ENCODE measurements at regions of chr9 and their contacts with region 1.

Region 1: GRCh38 chr9:13351778-13352386 is 72.4 kb upstream of the MPDZ start:
- DNase-seq: peak; percentile 74
- H3K4me3 ChIP-seq: no peak overlapping the region
- H3K27ac ChIP-seq: no peak overlapping the region
- H3K4me1 ChIP-seq: no peaks in the 10 kb centered on the region
- H3K27me3 ChIP-seq: no peaks in the 10 kb centered on the region
- CTCF ChIP-seq: peak; percentile 32 to 37
- POLR2A ChIP-seq: no peak

Region 2: DNA sequence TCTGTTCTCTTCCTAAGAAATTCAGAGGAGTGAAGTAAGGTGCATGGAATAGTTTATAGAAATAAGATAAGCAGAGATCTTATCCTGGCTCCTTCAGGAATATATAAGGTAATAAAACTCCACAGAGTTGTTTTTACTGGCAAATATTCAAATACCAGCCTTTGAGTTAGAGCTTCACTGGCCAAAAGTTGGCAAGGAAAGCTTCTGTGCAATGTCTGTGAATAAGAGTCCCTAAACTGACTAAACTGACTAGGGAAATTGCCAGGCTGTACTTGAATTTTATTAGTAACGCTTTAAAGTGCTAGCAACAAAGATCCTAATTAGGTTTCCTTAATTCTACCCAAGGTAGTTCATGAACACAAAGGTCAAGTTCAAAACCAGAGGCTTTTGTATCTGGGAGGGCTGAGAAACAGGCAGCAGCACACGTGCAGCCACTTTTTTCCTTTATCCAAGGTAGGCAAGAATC is 58.7 kb after region 1 on chr9:
- CTCF ChIA-PET with region 1: interaction called, 3 read pairs
- POLR2A ChIA-PET with region 1: no interaction called
- dilution Hi-C with region 1: no loop called
- intact Hi-C with region 1: loop called (anchors 5 kb)
- DNase-seq: peak; percentile 80
- H3K4me3 ChIP-seq: no peak overlapping the region
- H3K27ac ChIP-seq: no peak overlapping the region
- H3K4me1 ChIP-seq: no peaks in the 10 kb centered on the region
- H3K27me3 ChIP-seq: peaks cover 7 to 14% of the 10 kb centered on the region in 2 experiments
- CTCF ChIP-seq: no peak
- POLR2A ChIP-seq: no peak

Region 3: DNA sequence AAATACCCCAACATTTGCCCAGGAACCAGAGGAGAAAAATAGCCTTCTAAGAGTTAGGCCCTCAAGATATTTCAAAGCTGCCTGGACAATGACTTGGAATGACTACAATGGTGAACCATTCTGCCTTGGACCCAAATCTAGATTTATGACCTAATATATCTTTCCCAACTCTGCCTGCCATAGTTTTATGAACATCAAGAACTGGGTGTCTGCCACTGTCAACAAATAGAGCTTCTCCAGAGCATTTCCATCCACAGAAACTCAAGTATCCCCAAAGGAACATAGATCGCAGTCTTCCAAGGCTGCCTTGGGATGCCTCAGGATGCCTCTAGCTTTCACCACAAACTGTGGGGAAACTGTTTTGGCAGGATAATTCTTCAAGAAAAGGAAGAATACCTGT is 1010.3 kb after region 1 on chr9:
- CTCF ChIA-PET with region 1: no interaction called
- POLR2A ChIA-PET with region 1: no interaction called
- dilution Hi-C with region 1: no loop called
- intact Hi-C with region 1: loop called (anchors 2 kb)
- DNase-seq: no peak
- H3K4me3 ChIP-seq: no peak overlapping the region
- H3K27ac ChIP-seq: no peak overlapping the region
- H3K4me1 ChIP-seq: peaks cover 3% of the 10 kb centered on the region
- H3K27me3 ChIP-seq: no peaks in the 10 kb centered on the region
- CTCF ChIP-seq: no peak
- POLR2A ChIP-seq: no peak

Region 4: DNA sequence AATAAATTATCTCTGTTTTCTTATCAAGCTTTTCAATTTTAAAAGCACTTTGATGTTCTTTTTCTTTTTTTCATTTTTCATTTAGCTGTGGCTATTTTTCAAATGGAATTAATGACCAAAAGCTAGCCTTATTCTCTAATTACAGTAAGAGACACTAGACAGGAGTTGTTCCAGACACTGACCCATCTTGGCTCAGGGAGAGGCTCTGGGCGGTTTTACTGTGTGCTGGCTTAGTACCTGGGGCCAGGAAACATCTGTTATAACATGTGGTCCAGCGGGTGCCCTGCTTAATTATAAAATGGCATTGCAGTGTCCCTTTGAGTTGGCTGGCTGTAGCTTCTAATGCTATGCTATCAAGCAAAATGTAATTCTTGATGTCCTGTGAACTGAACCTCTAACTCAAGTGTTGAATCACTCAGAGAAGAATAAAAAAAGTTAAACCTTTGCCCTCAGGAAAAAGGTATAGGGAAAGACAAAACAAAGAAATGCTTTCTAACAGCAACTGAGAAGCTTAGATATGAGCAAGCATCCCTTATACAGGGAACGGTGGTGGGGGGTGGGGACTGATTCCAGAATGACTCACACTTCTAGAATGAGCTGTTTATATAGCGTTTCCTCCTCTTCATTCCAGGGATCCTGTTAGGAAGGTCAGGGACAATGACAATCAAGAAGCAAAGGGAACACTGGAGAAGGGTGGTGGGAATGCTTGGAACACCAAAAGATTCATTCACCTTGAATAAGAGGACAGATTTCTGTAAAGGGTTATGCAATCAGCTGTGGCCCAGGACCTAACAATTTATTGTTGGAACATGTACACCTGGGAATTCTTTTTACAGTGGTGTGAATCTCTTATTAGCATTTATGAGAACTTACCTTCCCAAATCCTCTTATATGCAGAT is 1020.8 kb after region 1 on chr9:
- CTCF ChIA-PET with region 1: no interaction called
- POLR2A ChIA-PET with region 1: no interaction called
- dilution Hi-C with region 1: no loop called
- intact Hi-C with region 1: no loop called
- DNase-seq: peak; percentile 98
- H3K4me3 ChIP-seq: peak overlapping the region in 1 of 3 experiments; percentile 29
- H3K27ac ChIP-seq: peak overlapping the region; percentile 96
- H3K4me1 ChIP-seq: peaks cover 36% of the 10 kb centered on the region
- H3K27me3 ChIP-seq: no peaks in the 10 kb centered on the region
- CTCF ChIP-seq: no peak
- POLR2A ChIP-seq: peak; percentile 70

Region 5: DNA sequence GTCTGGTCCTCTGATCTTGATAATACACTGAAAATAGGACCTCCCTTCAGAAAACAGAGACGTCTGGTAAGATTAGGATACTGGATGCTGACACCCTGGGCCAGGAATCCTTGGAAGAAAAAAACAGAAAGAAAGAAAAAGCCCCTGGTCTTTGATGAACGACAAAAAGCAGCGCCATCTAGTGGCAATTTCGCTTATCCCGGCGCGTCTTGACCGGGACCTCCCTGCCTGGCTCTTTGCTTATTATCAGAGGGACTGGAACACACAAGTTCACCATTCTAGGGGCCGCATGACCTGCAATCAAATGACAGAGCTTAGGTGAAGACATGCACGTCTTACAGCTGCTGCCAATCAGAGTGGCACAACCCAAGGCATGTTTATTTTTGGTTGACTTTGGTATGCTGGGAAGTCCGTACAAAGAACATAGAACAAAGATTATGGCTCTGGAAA is 1076.9 kb after region 1 on chr9:
- CTCF ChIA-PET with region 1: interaction called, 7 read pairs
- POLR2A ChIA-PET with region 1: no interaction called
- dilution Hi-C with region 1: no loop called
- intact Hi-C with region 1: loop called (anchors 1 kb)
- DNase-seq: peak; percentile 68
- H3K4me3 ChIP-seq: no peak overlapping the region
- H3K27ac ChIP-seq: no peak overlapping the region
- H3K4me1 ChIP-seq: peaks cover 15% of the 10 kb centered on the region
- H3K27me3 ChIP-seq: no peaks in the 10 kb centered on the region
- CTCF ChIP-seq: peak; percentile 79 to 84
- POLR2A ChIP-seq: no peak

Measured in endothelial cell of umbilical vein (primary cell).